ENCODE measurements at regions of chr10 and their contacts with region 1.

Region 1: DNA sequence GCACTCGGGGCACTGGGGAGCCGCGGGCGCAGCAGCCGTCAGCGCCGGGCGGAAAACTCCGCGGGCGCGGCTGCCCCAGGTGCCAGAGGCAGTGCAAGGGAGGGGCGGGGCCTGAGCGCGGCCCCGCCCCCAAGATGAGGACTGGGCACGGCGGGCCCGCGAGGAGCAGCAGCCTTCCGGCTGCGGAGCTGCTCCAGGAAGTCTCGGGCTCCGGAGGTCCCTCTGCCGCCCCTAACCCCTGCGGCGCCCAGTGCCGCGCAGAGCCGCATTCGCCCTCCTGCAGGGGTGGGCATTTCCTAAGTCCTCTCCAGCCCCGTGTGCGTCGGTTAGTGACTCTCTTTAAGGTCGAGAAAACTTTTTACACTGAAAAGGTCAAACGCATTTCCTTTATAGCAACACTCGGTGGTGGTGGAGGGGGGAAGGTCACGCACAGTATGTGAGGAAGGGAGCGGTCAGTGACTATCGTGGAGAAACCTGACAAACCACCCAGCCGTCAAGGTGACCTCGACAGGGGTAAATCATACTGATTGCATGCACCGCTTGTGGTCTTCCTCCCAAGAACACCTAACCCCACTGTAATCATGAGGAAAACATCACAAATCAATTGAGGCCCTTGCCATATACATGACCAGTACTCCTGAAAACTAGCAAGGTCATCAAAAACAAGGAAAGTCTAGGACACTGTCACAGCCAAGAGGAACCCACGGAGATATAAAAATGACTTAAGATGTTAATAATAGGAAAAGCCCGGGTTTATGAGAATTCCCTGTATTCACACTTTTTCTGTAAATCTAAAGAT is at the start of gene ANXA11:
- DNase-seq: peak; percentile 100
- ATAC-seq: peak; percentile 52
- H3K4me3 ChIP-seq: peak within 1 kb of the TSS; percentile 69
- H3K27ac ChIP-seq: peak within 1 kb of the TSS; percentile 80
- H3K4me1 ChIP-seq: peaks cover 80% of the 10 kb centered on the region
- H3K27me3 ChIP-seq: no peaks in the 10 kb centered on the region
- CTCF ChIP-seq: peak; percentile 1; the same call in 1 of the 2 replicates
- total RNA-seq, gene ANXA11: 434 and 520 TPM in 2 replicates

Region 2: GRCh38 chr10:79438021-79438698 is 767.5 kb before region 1 on chr10:
- CTCF ChIA-PET with region 1: no interaction called
- POLR2A ChIA-PET with region 1: interaction called, 10 read pairs
- intact Hi-C with region 1: no loop called
- DNase-seq: peak; percentile 64
- ATAC-seq: peak; percentile 2; the same call in 1 of the 2 replicates
- H3K4me3 ChIP-seq: no peak overlapping the region
- H3K27ac ChIP-seq: peak overlapping the region; percentile 82
- H3K4me1 ChIP-seq: peaks cover 81% of the 10 kb centered on the region
- H3K27me3 ChIP-seq: no peaks in the 10 kb centered on the region
- CTCF ChIP-seq: peak; percentile 96

Region 3: DNA sequence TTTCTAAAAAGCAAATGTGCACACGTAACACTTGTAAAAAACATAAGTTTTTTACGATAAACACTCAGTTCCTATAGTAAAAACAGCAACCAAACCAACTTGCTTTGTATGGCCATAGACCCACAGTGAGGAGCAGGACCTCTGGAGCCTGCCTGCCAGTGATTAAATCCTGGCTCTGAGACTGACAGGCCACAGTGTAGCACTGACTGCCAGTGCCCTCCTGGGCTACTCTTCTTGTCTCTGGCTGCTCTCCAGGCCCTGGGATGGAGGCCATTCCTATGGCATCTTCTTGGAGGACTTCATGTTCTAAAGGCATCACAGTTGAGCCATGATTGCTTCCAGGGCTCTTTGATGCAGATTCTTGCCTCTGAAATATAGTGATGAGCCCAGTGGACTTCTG is 149.9 kb before region 1 on chr10:
- CTCF ChIA-PET with region 1: no interaction called
- POLR2A ChIA-PET with region 1: no interaction called
- intact Hi-C with region 1: loop called (anchors 5 kb)
- DNase-seq: no peak
- ATAC-seq: no peak
- H3K4me3 ChIP-seq: no peak overlapping the region
- H3K27ac ChIP-seq: no peak overlapping the region
- H3K4me1 ChIP-seq: no peaks in the 10 kb centered on the region
- H3K27me3 ChIP-seq: no peaks in the 10 kb centered on the region
- CTCF ChIP-seq: no peak

Region 4: DNA sequence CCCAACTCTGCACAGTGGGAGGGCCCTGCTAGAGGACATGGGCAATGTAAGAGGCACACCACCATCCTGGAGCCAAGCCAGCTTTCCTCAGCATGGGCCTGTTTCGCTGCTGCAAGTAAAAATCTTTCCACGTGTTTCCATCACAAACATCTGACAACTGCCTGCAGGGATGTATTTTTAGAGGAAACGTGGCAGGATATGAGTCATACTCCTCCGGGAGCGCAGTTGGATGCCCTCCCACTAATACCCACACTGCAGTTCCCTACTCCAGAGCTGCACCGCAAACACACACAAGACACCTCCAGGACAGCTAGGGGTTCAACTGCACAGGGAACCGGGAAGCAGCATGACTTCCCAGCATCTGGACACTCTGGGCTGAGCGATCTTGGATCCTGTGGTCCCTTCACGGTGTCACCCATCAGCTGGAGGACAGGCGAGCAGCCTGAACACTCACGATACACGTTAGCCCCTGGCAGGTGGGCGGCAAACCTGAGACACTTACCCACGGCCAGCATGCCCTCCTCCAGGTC is 47.0 kb before region 1 on chr10:
- CTCF ChIA-PET with region 1: interaction called, 5 read pairs
- POLR2A ChIA-PET with region 1: interaction called, 12 read pairs
- intact Hi-C with region 1: loop called (anchors 1 kb)
- DNase-seq: peak; percentile 100
- ATAC-seq: peak; percentile 70
- H3K4me3 ChIP-seq: peak overlapping the region; percentile 2; the same call in 1 of the 2 replicates
- H3K27ac ChIP-seq: peak overlapping the region; percentile 65
- H3K4me1 ChIP-seq: peaks cover 64% of the 10 kb centered on the region
- H3K27me3 ChIP-seq: no peaks in the 10 kb centered on the region
- CTCF ChIP-seq: no peak

Region 5: GRCh38 chr10:80163741-80164341 is 41.8 kb before region 1 on chr10:
- CTCF ChIA-PET with region 1: interaction called, 6 read pairs
- POLR2A ChIA-PET with region 1: interaction called, 9 read pairs
- intact Hi-C with region 1: loop called (anchors 1 kb)
- DNase-seq: peak; percentile 100
- ATAC-seq: peak; percentile 71
- H3K4me3 ChIP-seq: peak overlapping the region; percentile 23
- H3K27ac ChIP-seq: peak overlapping the region; percentile 78
- H3K4me1 ChIP-seq: peaks cover 55% of the 10 kb centered on the region
- H3K27me3 ChIP-seq: no peaks in the 10 kb centered on the region
- CTCF ChIP-seq: no peak

Region 6: GRCh38 chr10:80344276-80344675 is 138.6 kb after region 1 on chr10:
- CTCF ChIA-PET with region 1: no interaction called
- POLR2A ChIA-PET with region 1: no interaction called
- intact Hi-C with region 1: no loop called
- DNase-seq: no peak
- ATAC-seq: no peak
- H3K4me3 ChIP-seq: no peak overlapping the region
- H3K27ac ChIP-seq: no peak overlapping the region
- H3K4me1 ChIP-seq: no peaks in the 10 kb centered on the region
- H3K27me3 ChIP-seq: no peaks in the 10 kb centered on the region
- CTCF ChIP-seq: no peak

Region 7: DNA sequence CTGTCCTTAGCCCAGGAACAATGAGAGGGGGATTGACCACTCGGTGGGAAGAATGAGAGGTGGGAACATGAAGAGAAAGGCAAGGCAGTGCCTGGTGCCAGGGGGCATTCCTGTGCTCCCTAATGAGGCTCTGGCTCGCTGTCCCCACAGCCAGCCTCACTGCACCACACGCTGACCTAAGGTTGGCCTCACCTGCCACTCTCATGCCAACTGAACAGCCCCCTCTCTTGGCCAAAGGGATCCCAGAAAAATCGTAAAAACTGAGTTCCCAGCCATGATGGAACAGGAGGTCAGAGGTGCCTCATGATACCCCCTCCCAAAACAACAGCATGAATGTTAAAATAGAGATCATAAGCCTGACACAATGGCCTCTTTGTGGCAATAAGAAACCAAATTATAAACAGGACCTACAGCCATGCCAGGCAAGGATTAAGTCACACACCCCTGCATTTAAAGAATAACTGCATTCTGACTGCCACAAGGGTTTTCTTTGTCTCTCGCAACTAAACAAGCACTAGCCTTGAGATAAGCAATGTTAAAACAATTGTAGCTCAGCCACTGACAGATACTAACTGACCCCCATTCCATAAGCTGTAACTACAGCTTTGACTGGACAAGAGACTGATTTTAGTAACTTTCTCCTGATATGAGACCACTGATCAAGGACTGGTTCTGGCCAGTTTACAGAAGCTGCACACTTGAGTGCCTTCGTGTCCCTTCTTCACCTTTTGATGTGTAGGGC is 481.2 kb after region 1 on chr10:
- CTCF ChIA-PET with region 1: no interaction called
- POLR2A ChIA-PET with region 1: no interaction called
- intact Hi-C with region 1: no loop called
- DNase-seq: no peak
- ATAC-seq: no peak
- H3K4me3 ChIP-seq: no peak overlapping the region
- H3K27ac ChIP-seq: no peak overlapping the region
- H3K4me1 ChIP-seq: no peaks in the 10 kb centered on the region
- H3K27me3 ChIP-seq: no peaks in the 10 kb centered on the region
- CTCF ChIP-seq: no peak

Measured in PC-3 (cell line).